Left lung (tissue), 14 donors: ENCODE measurements at regions of chr12 and their contacts with region 1.

Region 1: DNA sequence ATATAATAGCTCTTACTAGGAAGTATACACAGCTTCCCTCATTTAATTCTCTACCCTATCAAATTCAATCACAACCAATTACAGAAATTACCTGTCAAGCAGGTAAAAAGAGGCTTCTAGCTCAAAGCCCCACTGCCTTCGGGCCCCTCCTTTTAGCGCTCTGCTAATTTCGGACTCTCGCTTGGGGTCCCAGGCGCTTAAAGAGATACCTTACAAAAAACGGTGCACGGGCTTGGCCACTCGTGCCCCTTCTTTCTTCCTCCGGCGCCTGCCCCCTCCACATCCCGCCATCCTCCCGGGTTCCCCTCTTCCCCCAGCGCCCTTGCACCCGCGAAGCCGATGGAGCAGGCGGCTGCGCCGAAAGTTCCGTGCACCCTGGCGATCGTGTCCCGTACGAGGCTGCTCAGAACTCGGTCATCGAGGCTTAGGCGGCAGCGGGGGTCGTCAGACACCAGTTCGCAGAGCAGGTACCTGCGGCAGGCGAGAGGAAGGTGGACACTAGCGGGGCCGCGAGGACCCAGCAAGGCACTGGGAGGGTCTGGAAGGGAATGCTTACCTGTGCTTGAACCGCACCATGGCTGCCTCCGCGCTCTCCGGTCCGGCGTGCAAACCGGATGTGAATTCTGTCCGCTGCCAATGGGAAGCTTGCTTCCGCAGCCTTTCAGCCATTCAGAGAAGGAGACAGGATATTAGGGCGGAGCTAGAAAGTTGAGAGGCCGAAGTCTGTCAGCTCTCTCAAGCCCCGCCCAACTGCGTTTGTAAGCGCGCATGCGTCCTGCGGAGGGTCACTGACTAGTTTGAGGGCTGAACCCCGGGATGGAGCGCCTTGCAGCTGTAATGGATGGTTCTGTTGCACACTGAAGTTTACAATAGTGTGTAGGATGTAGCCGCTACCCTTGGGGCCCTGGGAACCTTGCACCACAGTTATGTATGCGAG is at the start of gene POP5:
- DNase-seq: peak; percentile 94 to 99 (median 98)
- ATAC-seq: peak; percentile 95
- H3K4me3 ChIP-seq: peak within 1 kb of the TSS; percentile 82 to 90
- H3K27ac ChIP-seq: peak within 1 kb of the TSS; percentile 14 to 79
- H3K4me1 ChIP-seq: peaks cover 0 to 41% of the 10 kb centered on the region in 2 donors
- H3K27me3 ChIP-seq: peaks cover 0 to 24% of the 10 kb centered on the region in 2 donors
- CTCF ChIP-seq: no peak
- polyA plus RNA-seq, gene POP5: 41.8 to 52.6 (median 50.3) TPM

Region 2: DNA sequence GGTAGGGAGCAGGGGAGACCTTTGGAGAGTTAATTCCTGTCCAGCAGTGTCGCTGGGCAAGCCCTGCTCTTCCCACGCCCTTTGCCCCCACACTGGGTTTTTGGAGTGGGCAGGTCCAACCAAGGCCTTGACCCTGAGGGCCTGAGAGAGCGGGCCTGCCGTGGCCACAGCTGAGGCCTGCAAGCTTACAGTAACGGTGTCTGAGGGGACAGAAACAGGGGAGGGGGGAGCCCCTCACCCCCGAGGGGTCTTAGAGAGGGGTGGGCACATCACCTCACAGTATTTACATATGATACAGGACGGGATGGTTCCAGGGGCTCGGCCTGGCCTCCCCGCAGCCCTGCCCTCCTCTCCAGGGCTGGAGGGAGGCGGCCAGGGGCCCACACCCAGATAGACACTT is 238.9 kb before region 1 on chr12:
- intact Hi-C with region 1: no loop called
- DNase-seq: no peak
- ATAC-seq: no peak
- H3K4me3 ChIP-seq: no peak overlapping the region
- H3K27ac ChIP-seq: no peak overlapping the region
- H3K4me1 ChIP-seq: no peaks in the 10 kb centered on the region
- H3K27me3 ChIP-seq: no peaks in the 10 kb centered on the region
- CTCF ChIP-seq: no peak

Region 3: GRCh38 chr12:120640840-120641833 is 60.1 kb after region 1 on chr12:
- intact Hi-C with region 1: loop called in 1 of 2 experiments (anchors 10 kb)
- DNase-seq: peak; percentile 48 to 88 (median 58)
- ATAC-seq: peak; percentile 95
- H3K4me3 ChIP-seq: peak overlapping the region; percentile 21 to 40
- H3K27ac ChIP-seq: no peak overlapping the region
- H3K4me1 ChIP-seq: peaks cover 6 to 15% of the 10 kb centered on the region in 2 donors
- H3K27me3 ChIP-seq: peaks cover 21 to 79% of the 10 kb centered on the region in 2 donors
- CTCF ChIP-seq: no peak

Region 4: DNA sequence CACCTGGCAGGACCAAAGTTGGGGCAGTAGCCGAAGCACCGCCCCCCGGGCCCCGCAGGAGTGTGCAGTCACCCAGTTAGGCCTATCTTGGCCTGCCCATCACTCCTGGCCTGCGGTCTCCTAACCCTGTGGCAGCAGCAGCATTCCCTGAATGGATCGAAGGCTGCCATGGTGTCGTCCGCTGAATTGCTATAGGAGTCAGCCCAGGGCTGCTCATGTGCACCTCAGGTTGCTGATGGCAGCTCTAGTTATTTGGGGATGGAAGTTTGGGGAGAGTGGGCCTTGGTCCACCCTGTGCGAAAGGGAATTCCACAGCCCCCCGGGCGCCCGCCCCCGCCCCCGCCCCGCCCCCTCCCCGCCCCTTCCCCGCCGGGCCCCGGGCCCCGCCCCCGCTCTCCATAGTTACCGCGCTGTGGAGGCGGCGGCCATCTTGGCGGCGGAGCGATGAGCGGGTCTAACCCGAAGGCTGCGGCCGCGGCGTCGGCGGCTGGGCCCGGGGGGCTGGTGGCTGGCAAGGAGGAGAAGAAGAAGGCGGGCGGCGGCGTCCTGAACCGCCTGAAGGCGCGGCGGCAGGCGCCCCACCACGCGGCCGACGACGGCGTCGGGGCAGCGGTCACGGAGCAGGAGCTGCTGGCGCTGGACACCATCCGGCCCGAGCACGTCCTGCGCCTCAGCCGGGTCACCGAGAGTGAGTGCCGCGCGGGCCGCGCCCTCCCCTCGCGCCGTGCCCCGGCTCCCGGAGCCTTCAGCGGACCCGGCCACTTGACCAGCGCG is 129.2 kb after region 1 on chr12 and contains the start of gene UNC119B:
- intact Hi-C with region 1: loop called in 1 of 2 experiments (anchors 10 kb)
- DNase-seq: peak; percentile 65 to 96 (median 74)
- ATAC-seq: peak; percentile 89
- H3K4me3 ChIP-seq: peak within 1 kb of the TSS; percentile 84 to 88
- H3K27ac ChIP-seq: peak within 1 kb of the TSS; percentile 83 to 88
- H3K4me1 ChIP-seq: peaks cover 12 to 41% of the 10 kb centered on the region in 2 donors
- H3K27me3 ChIP-seq: no peaks in the 10 kb centered on the region
- CTCF ChIP-seq: no peak
- polyA plus RNA-seq, gene UNC119B: 45.2 to 63.2 (median 55.7) TPM